Activated T-helper 1 cell treated with anti-CD3 and anti-CD28 coated beads, Interleukin-12 subunit alpha, Interleukin-12 subunit beta, Interleukin-2, Interleukin-4 antibody, amounts not matched to agents 30 ng/mL and 10 ng/mL and 1 ng/mL, durations not matched to agents 14 hours and 24 hours and 36 hours (primary cell): ENCODE measurements at regions of chr1 and their contacts with region 1.

Region 1: GRCh38 chr1:32650752-32651460 is at the start of gene RBBP4:
- DNase-seq: peak; percentile 99
- H3K4me3 Mint-ChIP-seq: peak within 1 kb of the TSS; percentile 94
- H3K27ac Mint-ChIP-seq: peak within 1 kb of the TSS; percentile 100
- H3K4me1 Mint-ChIP-seq: peaks cover 55% of the 10 kb centered on the region
- H3K27me3 Mint-ChIP-seq: peaks cover 2% of the 10 kb centered on the region
- total RNA-seq, gene RBBP4: 315 TPM in 2 replicates

Region 2: GRCh38 chr1:32470991-32471694 is 179.8 kb before region 1 on chr1:
- intact Hi-C with region 1: no loop called
- DNase-seq: no peak
- H3K4me3 Mint-ChIP-seq: no peak overlapping the region
- H3K27ac Mint-ChIP-seq: no peak overlapping the region
- H3K4me1 Mint-ChIP-seq: no peaks in the 10 kb centered on the region
- H3K27me3 Mint-ChIP-seq: peaks cover 26% of the 10 kb centered on the region

Region 3: DNA sequence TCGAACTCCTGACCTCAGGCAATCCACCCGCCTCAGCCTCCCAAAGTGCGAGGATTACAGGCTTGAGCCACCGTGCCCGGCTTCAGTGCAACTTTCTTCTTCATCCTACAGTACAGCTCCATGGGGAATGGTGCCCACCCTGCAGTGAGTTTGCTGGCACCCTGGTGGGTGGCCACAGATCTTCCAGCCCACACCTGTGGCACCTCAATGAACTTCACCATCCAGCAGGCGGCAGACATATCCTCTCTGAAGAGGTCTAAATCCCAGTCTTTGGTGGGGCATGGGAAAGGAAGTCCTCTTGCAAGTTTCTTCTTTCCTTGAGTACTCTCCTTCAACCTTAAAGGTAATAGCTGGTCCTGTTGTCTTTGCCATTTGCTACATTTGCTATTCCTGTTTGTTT is 129.7 kb before region 1 on chr1:
- intact Hi-C with region 1: loop called (anchors 1 kb)
- DNase-seq: no peak
- H3K4me3 Mint-ChIP-seq: peak overlapping the region; percentile 50
- H3K27ac Mint-ChIP-seq: peak overlapping the region; percentile 20
- H3K4me1 Mint-ChIP-seq: peaks cover 5% of the 10 kb centered on the region
- H3K27me3 Mint-ChIP-seq: peaks cover 7% of the 10 kb centered on the region

Region 4: DNA sequence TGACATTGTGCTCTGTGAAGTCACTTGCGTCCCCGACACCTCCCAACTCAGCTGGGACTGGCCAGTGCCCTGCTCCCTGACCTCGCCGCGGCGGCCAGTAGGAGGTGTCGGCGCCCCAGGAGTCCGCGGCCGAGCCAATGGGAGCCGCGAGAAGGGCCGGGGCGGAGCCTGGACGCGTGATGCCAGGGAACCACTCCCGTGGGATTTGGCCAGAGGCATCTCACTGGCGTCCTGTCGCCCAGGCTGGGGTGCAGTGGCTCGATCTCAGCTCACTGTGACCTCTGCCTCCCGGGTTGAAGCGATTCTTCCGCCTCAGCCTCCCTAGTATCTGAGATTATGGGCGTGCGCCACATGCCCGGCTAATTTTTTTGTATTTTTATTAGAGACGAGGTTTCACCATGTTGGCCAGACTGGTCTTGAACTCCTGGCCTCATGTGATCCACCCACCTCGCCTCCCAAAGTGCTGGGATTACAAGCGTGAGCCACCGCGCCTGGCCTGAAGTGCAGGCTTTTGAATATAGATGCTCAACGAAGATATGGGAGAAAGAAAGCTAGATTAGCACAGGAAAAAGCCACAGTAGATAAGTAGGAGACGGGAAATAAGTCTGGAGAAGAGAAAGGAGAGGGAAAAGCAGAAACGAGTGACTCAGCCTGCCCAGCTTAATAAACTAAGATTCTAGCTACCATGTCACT is 38.6 kb before region 1 on chr1:
- intact Hi-C with region 1: loop called (anchors 1 kb)
- DNase-seq: peak; percentile 30
- H3K4me3 Mint-ChIP-seq: peak overlapping the region; percentile 42
- H3K27ac Mint-ChIP-seq: no peak overlapping the region
- H3K4me1 Mint-ChIP-seq: peaks cover 12% of the 10 kb centered on the region
- H3K27me3 Mint-ChIP-seq: no peaks in the 10 kb centered on the region

Region 5: DNA sequence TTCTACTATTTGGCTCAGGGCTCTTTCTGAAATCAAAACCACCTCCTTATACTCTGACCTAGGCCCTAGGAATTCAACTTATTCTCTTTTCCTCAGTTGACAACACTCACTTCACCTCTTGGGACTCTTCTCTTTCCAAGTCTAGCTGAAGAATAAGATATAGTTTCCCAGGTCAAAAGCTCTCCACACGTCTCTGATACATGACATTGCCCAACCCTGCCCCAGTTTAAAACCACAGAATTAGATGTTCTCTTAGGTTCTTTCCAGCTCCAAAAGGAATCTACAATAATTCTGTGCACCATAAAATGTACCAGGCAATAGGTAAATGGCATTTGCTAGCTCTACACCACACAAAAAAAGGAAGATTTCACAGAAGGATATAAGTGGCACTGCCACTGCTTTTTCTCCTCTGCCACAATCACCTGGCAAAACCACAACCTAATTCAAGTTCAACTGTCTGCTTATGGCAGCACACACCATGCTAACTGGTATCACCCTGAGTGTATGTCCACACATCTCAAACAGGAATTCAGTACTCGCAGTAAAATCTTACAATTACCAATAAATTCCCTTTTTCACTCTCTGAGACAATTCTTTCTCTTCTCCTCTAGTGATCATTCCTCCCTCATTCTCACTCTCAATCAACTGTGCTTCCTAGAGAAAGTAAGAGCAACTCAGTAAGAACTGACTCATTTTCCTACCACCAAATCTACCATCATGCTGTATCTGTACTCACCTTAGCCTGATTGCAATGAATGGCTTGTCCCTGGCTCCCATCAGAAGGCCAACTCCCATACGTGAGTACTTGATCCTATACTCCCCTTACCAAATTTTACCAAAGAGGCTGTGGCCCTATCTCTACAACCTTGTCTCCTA is 27.9 kb before region 1 on chr1:
- intact Hi-C with region 1: loop called (anchors 2 kb)
- DNase-seq: no peak
- H3K4me3 Mint-ChIP-seq: no peak overlapping the region
- H3K27ac Mint-ChIP-seq: peak overlapping the region; percentile 64
- H3K4me1 Mint-ChIP-seq: peaks cover 38% of the 10 kb centered on the region
- H3K27me3 Mint-ChIP-seq: no peaks in the 10 kb centered on the region

Region 6: DNA sequence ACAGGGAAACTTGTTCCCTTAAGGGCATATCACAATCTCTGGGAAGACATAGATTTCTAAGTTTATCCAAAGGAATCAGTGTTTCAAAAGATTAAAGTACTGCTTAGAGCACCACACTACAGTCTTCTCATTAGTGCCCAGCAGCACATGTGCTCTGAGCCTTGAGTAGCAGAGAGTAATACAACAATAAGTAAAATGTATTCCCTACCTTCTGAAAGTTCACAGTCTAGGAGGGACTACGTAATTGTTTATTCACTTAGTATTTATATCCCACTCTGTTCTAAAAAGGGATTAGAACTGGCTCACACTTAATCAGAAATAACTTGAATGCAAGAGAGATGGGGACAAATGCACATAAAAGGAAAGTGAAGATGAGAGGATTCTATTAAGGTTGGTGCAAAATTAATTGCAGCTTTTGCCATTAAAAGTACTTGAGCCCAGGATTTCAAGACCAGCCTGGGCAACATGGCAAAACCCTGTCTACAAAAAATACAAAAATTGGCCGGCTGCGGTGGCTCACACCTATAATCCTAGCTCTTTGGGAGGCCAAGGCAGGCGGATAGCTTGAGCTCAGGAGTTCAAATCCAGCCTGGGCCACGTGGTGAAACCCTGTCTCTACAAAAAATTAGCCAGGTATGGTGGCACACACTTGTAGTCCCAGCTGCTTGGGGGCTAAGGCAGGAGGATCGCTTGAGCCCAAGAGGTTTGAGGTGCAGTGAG is 42.7 kb after region 1 on chr1:
- intact Hi-C with region 1: no loop called
- DNase-seq: no peak
- H3K4me3 Mint-ChIP-seq: no peak overlapping the region
- H3K27ac Mint-ChIP-seq: no peak overlapping the region
- H3K4me1 Mint-ChIP-seq: peaks cover 5% of the 10 kb centered on the region
- H3K27me3 Mint-ChIP-seq: no peaks in the 10 kb centered on the region

Region 7: GRCh38 chr1:32798679-32799416 is 147.9 kb after region 1 on chr1:
- intact Hi-C with region 1: loop called (anchors 1 kb)
- DNase-seq: peak; percentile 49
- H3K4me3 Mint-ChIP-seq: peak overlapping the region; percentile 68
- H3K27ac Mint-ChIP-seq: peak overlapping the region; percentile 96
- H3K4me1 Mint-ChIP-seq: peaks cover 47% of the 10 kb centered on the region
- H3K27me3 Mint-ChIP-seq: no peaks in the 10 kb centered on the region